ENCODE measurements at regions of chr12 and their contacts with region 1.

Region 1: GRCh38 chr12:59595883-59596540 is at the start of gene SLC16A7:
- H3K4me3 Mint-ChIP-seq: peak within 1 kb of the TSS; percentile 80
- H3K27ac Mint-ChIP-seq: peak within 1 kb of the TSS; percentile 84
- H3K4me1 Mint-ChIP-seq: peaks cover 35% of the 10 kb centered on the region
- H3K27me3 Mint-ChIP-seq: peaks cover 4% of the 10 kb centered on the region

Region 2: DNA sequence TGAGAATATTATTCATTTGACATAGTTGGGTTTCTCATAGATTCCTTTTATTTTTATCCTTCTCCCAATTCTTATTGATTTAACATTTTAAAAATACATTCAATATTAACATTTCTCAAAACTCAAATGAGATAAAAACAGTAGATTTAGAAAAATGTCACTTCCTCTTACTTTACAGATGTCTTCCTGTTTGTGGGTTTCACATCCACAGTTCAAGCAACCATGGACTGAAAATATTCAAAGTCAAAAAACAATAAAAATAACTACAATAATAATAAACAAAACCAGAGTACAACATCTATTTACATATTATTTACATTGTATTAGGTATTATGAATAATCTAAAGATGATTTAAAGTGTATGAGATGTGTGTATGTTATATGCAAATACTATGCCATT is 111.4 kb before region 1 on chr12:
- intact Hi-C with region 1: loop called (anchors 10 kb)
- H3K4me3 Mint-ChIP-seq: no peak overlapping the region
- H3K27ac Mint-ChIP-seq: no peak overlapping the region
- H3K4me1 Mint-ChIP-seq: peaks cover 13% of the 10 kb centered on the region
- H3K27me3 Mint-ChIP-seq: no peaks in the 10 kb centered on the region

Region 3: GRCh38 chr12:59980476-59980875 is 384.5 kb after region 1 on chr12:
- intact Hi-C with region 1: no loop called
- H3K4me3 Mint-ChIP-seq: no peak overlapping the region
- H3K27ac Mint-ChIP-seq: no peak overlapping the region
- H3K4me1 Mint-ChIP-seq: no peaks in the 10 kb centered on the region
- H3K27me3 Mint-ChIP-seq: no peaks in the 10 kb centered on the region